AG04449 (cell line): ENCODE measurements at regions of chr5 and their contacts with region 1.

Region 1: GRCh38 chr5:126354012-126354857 is 69.0 kb upstream of the GRAMD2B start:
- DNase-seq: peak; percentile 96
- H3K4me3 ChIP-seq: peak overlapping the region; percentile 36
- CTCF ChIP-seq: peak; percentile 27

Region 2: GRCh38 chr5:126369967-126370731 is 15.9 kb after region 1 on chr5:
- CTCF ChIA-PET with region 1: interaction called, 12 read pairs
- POLR2A ChIA-PET with region 1: no interaction called
- DNase-seq: no peak
- H3K4me3 ChIP-seq: no peak overlapping the region
- CTCF ChIP-seq: no peak

Region 3: GRCh38 chr5:126446498-126447224 is 92.4 kb after region 1 on chr5:
- CTCF ChIA-PET with region 1: interaction called, 17 read pairs
- POLR2A ChIA-PET with region 1: interaction called, 3 read pairs
- DNase-seq: peak; percentile 80
- H3K4me3 ChIP-seq: no peak overlapping the region
- CTCF ChIP-seq: no peak

Region 4: GRCh38 chr5:126490167-126490940 is 136.1 kb after region 1 on chr5:
- CTCF ChIA-PET with region 1: interaction called, 35 read pairs
- POLR2A ChIA-PET with region 1: no interaction called
- DNase-seq: no peak
- H3K4me3 ChIP-seq: no peak overlapping the region
- CTCF ChIP-seq: peak; percentile 13

Region 5: DNA sequence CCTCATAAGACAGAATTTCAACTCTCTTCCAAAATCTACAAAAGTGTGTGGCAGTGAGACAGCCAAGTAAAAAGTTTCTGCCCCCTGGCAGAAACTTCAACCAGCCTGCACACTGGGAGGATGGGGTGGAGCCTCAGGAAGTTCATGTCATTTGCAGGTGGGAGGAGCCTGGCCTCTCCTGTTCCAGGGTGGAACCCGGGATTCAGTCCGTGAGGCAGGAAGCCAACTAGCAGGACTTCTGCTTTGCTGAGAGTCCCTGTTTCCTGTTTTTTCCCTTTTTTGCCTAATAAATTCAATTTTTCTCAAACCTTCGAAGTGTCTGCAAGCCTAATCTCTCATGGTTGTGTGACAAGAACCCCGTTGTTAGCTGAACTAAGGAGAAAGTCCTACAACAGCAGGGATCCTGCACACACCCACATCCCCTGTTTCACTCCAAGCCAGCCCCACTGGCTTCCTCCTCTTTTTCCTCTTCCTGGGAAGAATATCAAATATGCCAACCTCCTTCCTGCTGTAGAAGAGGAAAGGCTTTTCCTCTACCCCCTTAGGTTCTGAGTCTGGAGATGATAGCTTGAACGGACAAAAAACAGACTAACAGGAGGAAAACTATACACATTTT is 171.5 kb after region 1 on chr5:
- CTCF ChIA-PET with region 1: interaction called, 333 read pairs
- POLR2A ChIA-PET with region 1: no interaction called
- DNase-seq: no peak
- H3K4me3 ChIP-seq: no peak overlapping the region
- CTCF ChIP-seq: no peak

Region 6: DNA sequence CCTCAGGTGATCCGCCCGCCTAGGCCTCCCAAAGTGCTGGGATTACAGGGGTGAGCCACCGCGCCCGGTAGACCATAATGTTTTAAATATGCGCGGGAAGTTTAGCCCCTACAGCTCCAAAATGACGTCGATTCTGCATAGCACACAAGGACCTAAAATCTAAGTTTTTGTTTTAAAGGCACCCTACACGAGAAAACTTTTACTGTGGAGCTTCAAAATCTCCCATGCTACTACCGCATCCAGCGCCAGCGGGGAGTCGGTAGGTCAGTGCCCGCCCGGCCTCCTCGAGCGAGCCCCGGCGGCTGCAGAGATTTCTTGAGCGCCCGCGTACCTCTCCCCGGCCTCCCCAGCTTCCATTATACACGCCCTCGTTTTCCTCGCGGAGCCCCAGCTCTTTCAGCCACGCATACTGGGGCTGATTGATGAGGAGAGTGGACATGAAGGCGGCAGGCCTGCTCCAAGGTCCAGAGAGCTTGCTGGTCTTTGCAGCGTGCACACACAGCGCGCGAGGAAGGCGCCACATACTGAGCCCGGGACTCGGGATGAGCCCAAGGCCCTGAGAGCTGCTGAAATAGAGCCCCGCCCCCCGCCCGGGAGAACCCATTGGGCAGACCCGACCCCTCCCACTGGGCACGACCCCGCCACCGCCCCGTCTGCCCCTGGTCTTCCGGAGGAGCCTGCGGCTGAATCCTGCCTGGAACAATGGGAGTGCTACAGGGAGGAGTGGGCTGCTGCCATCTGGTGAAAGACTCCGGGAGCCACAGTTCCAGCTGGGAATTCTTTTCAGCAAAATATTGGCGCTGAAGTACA is 240.6 kb after region 1 on chr5 and contains the start of gene ALDH7A1:
- CTCF ChIA-PET with region 1: interaction called, 30 read pairs
- POLR2A ChIA-PET with region 1: no interaction called
- DNase-seq: peak; percentile 44
- H3K4me3 ChIP-seq: peak within 1 kb of the TSS; percentile 76
- CTCF ChIP-seq: peak; percentile 71